Posterior vena cava (tissue), 2 donors: ENCODE measurements at regions of chr10 and their contacts with region 1.

Region 1: DNA sequence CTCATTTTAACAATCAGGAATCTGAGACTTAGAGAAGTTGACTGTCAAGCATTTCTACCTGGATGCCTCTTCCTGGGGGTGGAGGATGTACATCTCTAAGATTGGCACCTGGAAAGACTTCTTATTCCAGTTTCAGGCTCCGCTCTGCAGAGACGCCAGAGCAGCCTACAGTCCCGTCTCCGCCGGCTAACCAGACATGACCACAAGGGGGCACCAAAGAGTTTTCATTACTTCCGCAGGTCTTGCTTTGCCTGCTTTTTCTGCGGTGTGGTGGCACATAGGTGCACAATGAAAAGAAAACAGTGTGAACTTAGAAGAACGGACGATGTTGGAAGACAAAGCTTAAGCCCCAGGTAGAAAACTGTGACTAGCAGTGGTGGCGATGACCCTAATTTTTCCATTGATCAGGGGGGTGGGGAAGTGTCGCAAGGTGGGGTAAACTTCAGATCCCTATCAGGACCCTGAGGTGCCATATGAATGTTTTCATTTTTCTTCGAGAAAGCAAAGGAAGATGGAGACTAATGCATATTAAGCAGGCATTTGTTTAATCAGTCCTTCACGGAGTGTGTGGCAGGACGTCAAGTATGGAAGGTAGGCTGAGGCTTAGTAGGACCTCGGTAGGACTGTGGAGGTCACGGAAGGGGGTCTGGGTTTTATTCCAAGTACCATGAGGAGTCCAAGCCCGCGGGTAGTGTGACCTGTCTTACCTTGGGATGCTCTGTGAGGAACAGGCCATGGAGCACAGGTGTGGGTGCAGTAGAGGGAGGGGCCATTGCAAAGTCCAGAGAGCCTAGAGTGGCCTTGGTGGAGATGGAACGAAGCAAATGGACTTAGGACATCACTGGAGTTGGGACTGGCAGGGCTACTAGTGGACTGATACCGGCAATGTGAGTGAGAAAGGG is 60.1 kb upstream of the SORCS3 start:
- DNase-seq: peak; percentile 86

Region 2: DNA sequence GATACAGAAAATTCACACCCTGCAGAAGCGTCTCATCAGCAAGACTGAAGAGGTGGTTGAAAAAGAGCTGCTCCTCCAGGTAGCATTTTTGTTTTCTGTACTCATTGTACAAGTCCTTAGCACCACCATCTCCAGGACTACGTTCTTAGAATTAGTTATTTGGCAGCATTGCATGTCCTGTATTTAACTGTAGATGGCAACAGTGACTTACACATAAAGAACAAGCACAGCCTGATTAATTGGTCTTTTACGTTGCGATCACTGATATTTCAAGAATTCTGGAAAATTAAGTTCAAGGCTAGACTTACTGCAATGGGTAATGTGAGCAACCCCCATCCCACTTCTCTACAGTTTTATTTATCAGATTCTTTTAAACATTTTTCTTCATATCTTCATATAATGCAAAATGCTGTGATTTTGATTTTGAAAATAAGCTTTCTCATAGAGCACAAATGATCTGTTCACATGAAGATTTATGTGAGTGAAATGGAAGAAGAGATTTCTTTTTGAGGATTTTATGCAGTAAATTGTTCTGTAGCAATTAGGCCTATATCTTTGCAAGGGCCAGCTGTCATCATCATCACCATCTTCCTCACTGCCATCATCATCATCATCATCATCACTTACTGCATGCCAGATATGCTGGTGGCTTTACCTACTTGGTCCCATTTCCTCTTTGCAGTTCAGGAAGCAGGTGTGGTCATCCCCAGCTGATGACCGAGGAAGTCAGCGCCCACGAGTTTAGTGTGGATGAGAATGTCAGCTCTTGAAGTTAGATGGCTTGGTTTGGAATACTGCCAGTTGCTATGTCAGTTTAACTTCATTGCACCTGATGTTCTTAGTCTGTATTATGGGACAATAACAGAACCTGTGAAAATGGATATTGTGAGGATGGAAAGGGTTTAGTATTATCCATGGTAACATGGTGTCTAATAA is 174.0 kb before region 1 on chr10:
- intact Hi-C with region 1: loop called (anchors 10 kb)
- DNase-seq: no peak

Region 3: DNA sequence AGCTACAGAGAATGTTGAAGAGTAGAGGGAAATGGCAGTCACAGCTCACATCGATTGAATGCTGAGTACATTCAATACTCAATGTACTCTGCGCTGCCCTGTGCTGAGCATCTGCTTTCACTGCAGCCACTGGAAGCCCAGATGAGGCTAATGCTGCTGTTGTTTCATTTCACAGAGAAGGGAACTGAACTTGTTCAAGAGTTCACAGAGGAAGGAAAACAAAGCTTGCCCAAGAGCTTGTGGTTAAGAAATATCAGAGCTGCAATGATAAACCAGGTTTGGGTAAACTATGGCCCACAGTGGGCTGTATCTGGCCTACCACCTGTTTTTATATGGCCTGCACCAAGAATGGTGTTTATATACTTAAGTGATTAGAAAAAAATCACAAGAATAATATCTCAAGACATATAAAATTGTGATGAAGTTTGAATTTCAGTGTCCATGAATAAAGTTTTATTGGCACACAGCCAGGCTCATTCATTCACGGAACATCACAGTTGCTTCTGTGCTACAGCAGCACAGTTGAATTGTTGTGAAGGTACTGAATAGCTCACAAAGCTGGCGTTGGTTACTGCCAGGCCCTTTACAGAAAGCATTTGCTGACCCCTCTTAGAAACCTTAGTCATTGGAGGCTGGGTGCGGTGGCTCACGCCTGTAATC is 163.3 kb before region 1 on chr10:
- intact Hi-C with region 1: loop called in 1 of 2 experiments (anchors 10 kb)
- DNase-seq: no peak